T-cell (primary cell): ENCODE measurements at regions of chr14 and their contacts with region 1.

Region 1: DNA sequence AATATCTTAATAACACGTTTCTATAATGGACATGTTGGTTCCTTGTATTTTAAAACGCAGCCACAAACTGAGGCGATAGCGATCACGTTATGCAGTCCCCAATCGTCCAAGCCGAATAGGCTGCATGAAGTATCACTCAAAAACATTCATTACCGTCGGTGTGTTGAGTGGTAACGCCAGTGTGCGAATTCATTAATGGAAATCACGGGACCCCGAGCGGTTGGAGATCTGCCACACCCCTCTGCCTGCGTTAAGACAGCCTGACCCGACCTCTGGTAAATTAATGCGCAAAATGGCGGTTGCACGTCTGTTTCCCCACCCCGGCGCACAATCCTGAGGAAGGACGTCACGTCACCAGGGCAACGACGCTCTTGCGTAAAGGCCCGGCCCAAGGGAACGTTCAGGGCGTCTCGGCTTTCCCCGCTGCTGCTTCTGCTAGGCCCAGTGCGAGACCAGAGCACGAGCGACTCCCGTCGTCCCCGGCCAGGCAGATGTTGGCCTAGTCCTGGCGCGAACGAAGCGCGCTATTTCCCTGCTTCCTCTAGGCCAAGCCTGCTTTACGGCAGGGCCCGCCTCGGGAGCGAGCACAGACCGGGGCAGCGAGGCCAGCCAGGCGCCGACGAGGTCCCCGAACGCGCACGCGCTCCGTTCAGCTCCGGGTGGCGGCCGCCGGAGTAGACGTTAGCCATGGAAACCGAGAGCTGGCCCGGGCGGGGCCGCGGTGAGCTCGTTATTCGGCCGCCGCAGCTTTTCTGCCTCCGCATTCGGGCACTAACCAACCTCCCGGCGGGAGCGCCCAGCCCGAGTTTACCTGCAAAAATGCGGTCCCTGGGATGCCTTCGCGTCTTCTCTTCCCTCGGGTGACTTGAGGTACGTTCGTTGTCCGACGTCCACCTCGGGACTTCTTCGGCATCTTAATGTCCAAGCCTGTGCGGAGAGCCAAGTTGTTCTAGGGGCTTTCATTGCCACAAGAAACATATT is at the start of gene PCNX4:
- DNase-seq: peak; percentile 87 to 99 (median 92)
- ATAC-seq: peak; percentile 93 to 95 (median 94)
- H3K4me3 ChIP-seq: peak within 1 kb of the TSS; percentile 74 to 92
- H3K4me3 Mint-ChIP-seq: peak within 1 kb of the TSS; percentile 89 to 91 (median 90)
- H3K27ac ChIP-seq: peak within 1 kb of the TSS; percentile 96
- H3K27ac Mint-ChIP-seq: peak within 1 kb of the TSS; percentile 99
- H3K4me1 ChIP-seq: peaks cover 12% of the 10 kb centered on the region in 2 experiments
- H3K4me1 Mint-ChIP-seq: peaks cover 44 to 50% (median 46%) of the 10 kb centered on the region in 3 donors
- H3K27me3 ChIP-seq: peaks cover 0 to 2% of the 10 kb centered on the region in 2 experiments
- H3K27me3 Mint-ChIP-seq: peaks cover 0 to 2% of the 10 kb centered on the region in 2 donors
- total RNA-seq, gene PCNX4: 36.4 to 50.4 (median 47.4) TPM

Region 2: DNA sequence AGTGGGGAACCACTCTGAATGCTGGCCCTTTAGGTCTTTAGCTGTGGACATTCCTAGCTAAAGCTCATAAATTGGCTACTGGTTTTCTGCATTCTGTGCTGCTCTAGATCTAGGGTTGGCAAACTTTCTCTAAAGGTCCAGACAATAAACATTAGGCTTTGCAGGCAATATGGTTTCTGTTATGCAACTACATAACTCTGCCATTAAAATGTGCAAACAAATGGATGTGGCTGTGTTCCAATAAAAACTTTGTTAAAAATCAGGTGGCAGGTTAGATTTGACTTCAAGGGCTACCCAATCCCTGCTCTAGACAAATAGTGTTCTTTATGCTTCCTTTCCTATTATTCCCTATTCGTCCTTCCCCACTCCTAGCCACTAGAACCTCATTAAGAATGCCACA is 178.7 kb before region 1 on chr14:
- CTCF ChIA-PET with region 1: no interaction called
- POLR2A ChIA-PET with region 1: no interaction called
- DNase-seq: no peak
- ATAC-seq: no peak
- H3K4me3 ChIP-seq: no peak overlapping the region
- H3K4me3 Mint-ChIP-seq: no peak overlapping the region
- H3K27ac ChIP-seq: no peak overlapping the region
- H3K27ac Mint-ChIP-seq: no peak overlapping the region
- H3K4me1 ChIP-seq: no peaks in the 10 kb centered on the region
- H3K4me1 Mint-ChIP-seq: no peaks in the 10 kb centered on the region
- H3K27me3 ChIP-seq: no peaks in the 10 kb centered on the region
- H3K27me3 Mint-ChIP-seq: peaks cover 25 to 31% of the 10 kb centered on the region in 2 donors

Region 3: GRCh38 chr14:59964251-59965007 is 127.4 kb before region 1 on chr14:
- CTCF ChIA-PET with region 1: interaction called, 4 to 11 read pairs
- POLR2A ChIA-PET with region 1: interaction called, 4 read pairs
- DNase-seq: peak in 2 of 35 experiments; percentile 1 to 23
- ATAC-seq: peak; percentile 4 to 55 (median 20)
- H3K4me3 ChIP-seq: no peak overlapping the region
- H3K4me3 Mint-ChIP-seq: peak overlapping the region; percentile 83 to 93 (median 85)
- H3K27ac ChIP-seq: peak overlapping the region; percentile 75
- H3K27ac Mint-ChIP-seq: peak overlapping the region; percentile 79 to 90
- H3K4me1 ChIP-seq: peaks cover 8 to 10% of the 10 kb centered on the region in 2 experiments
- H3K4me1 Mint-ChIP-seq: peaks cover 10 to 20% (median 15%) of the 10 kb centered on the region in 3 donors
- H3K27me3 ChIP-seq: peaks cover 0 to 3% of the 10 kb centered on the region in 2 experiments
- H3K27me3 Mint-ChIP-seq: peaks cover 4 to 8% of the 10 kb centered on the region in 2 donors

Region 4: GRCh38 chr14:60116181-60116580 is 24.3 kb after region 1 on chr14:
- CTCF ChIA-PET with region 1: no interaction called
- POLR2A ChIA-PET with region 1: no interaction called
- DNase-seq: no peak
- ATAC-seq: no peak
- H3K4me3 ChIP-seq: no peak overlapping the region
- H3K4me3 Mint-ChIP-seq: no peak overlapping the region
- H3K27ac ChIP-seq: no peak overlapping the region
- H3K27ac Mint-ChIP-seq: no peak overlapping the region
- H3K4me1 ChIP-seq: no peaks in the 10 kb centered on the region
- H3K4me1 Mint-ChIP-seq: peaks cover 7 to 10% (median 10%) of the 10 kb centered on the region in 3 donors
- H3K27me3 ChIP-seq: no peaks in the 10 kb centered on the region
- H3K27me3 Mint-ChIP-seq: no peaks in the 10 kb centered on the region

Region 5: DNA sequence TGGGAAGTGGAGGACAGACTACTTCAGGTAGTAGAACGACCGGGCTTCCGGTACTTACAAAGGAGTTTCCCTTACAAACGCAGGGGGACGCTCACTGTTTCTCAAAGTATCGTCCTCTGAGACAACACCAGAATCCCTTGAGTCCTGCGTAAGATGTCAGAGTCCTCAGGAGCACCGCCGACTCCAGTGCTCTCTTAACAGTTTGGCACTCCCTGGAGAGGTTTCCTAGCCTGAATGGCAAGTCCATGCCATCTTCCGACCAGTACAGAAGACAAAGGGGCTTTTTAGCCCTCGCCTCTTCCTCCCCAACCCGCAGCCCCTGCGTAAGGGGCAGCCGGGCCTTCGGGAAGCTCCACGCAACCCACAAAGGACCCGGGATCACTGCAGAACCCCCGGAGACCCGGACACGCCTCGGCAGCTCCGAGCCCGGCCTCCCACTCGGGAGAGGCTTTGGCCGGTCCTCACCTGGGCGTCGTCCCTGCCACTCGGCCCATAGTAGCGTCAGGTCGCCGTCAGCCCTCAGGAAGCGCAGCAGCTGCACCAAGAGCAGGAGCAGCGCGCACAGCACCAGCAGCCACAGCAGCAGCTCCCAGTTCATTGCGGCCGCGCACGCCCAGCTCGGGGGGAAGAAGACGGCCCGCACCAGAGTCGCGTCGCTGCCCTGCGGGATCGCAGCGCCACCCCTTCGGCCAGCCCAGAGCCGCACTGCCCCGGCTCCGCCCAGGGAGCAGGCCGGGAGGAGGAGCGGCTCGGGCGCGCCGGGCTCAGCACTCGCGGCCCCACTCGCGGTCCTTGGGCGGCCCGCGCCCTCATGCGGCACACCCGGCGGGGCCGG is 73.1 kb after region 1 on chr14 and contains the start of gene DHRS7:
- CTCF ChIA-PET with region 1: interaction called, 6 to 10 read pairs
- POLR2A ChIA-PET with region 1: interaction called, 3 to 7 read pairs
- DNase-seq: peak; percentile 26 to 83 (median 49)
- ATAC-seq: peak; percentile 78 to 84 (median 80)
- H3K4me3 ChIP-seq: peak within 1 kb of the TSS; percentile 89 to 92
- H3K4me3 Mint-ChIP-seq: peak within 1 kb of the TSS; percentile 94 to 100 (median 99)
- H3K27ac ChIP-seq: peak within 1 kb of the TSS; percentile 97
- H3K27ac Mint-ChIP-seq: peak within 1 kb of the TSS; percentile 99 to 100
- H3K4me1 ChIP-seq: peaks cover 3 to 32% of the 10 kb centered on the region in 2 experiments
- H3K4me1 Mint-ChIP-seq: peaks cover 41 to 53% (median 50%) of the 10 kb centered on the region in 3 donors
- H3K27me3 ChIP-seq: no peaks in the 10 kb centered on the region
- H3K27me3 Mint-ChIP-seq: no peaks in the 10 kb centered on the region
- total RNA-seq, gene DHRS7: 37.1 to 66.9 (median 54.0) TPM